ENCODE measurements at regions of chr5 and their contacts with region 1.

Region 1: DNA sequence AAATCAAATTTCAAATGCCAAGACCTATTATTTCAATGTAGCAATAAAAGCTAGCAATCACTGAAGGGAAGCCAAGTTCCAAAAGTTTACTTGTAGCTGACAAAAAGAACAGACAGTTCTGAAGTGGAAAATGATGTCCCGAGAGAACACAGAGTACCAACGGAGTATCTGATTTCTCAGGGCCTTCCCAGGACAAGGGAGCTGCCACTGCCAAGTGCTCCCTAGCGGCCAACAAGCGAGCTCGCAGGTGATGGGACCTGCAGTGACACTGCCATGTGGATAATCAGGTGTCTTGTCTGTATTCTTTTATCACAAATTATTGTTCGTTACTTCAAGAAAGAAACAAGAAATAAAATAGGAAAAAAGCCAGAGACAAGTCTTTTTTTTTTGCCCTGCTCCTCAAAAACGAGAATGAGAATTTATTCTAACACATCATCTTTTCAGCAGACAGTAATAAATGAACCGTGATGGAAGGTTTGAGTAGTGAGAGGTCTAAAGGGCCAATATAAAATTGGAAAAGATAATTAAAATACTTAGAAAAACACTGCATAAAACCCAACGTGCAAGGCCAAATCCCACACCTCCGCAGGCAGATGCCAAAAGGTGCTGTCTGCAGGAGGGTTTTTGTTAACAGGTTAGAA is 159.4 kb downstream of the MYO10 start:
- DNase-seq: peak; percentile 87 to 93
- ATAC-seq: peak; percentile 89 to 93
- H3K4me3 ChIP-seq: no peak overlapping the region
- H3K27ac ChIP-seq: peak overlapping the region; percentile 80 to 88 (median 82)
- H3K4me1 ChIP-seq: peaks cover 29 to 34% of the 10 kb centered on the region in 2 donors
- H3K27me3 ChIP-seq: no peaks in the 10 kb centered on the region
- CTCF ChIP-seq: peak; percentile 55 to 78 (median 67)
- POLR2A ChIP-seq: no peak

Region 2: GRCh38 chr5:16552666-16553343 is 223.9 kb before region 1 on chr5:
- in situ Hi-C with region 1: no loop called
- intact Hi-C with region 1: loop called (anchors 1 kb)
- DNase-seq: peak; percentile 75 to 86
- ATAC-seq: peak; percentile 67 to 81
- H3K4me3 ChIP-seq: no peak overlapping the region
- H3K27ac ChIP-seq: peak overlapping the region; percentile 90 to 97 (median 94)
- H3K4me1 ChIP-seq: peaks cover 22 to 25% of the 10 kb centered on the region in 2 donors
- H3K27me3 ChIP-seq: no peaks in the 10 kb centered on the region
- CTCF ChIP-seq: peak; percentile 75 to 84 (median 81)
- POLR2A ChIP-seq: no peak

Region 3: DNA sequence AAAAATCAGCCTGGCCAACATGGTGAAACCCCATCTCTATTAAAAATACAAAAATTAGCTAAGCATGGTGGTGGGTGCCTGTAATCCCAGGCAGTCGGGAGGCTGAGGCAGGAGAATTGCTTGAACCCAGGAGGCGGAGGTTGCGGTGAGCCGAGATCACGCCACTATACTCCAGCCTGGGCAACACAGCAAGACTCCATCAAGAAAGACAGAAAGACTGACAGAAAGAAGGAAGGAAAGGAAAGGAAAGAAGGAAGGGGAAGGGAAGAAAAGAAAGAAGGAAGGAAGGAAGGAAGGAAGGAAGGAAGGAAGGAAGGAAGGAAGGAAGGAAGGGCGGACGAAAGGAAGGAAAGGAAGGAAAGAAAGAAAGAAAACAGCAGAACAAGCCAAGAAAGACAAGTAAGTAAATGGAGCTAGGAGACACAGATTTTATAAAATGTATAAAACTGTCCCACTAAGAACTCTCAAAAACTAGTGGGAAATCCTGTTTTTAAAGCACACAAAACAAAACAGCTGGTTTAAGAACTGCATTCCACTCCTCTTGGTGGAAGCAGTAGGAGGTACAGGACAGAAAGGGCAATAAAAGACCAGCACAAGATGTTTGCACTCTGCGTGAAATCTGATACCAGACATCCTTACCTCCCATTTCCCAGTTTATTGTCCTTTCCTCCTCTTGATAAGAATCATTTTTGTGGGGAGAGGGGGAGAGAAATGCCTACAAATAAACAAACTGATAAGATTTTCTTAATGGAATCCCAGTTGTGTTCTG is 112.7 kb after region 1 on chr5:
- in situ Hi-C with region 1: no loop called
- intact Hi-C with region 1: loop called (anchors 5 kb)
- DNase-seq: no peak
- ATAC-seq: no peak
- H3K4me3 ChIP-seq: no peak overlapping the region
- H3K27ac ChIP-seq: no peak overlapping the region
- H3K4me1 ChIP-seq: peaks cover 7 to 34% of the 10 kb centered on the region in 2 donors
- H3K27me3 ChIP-seq: no peaks in the 10 kb centered on the region
- CTCF ChIP-seq: no peak
- POLR2A ChIP-seq: no peak

Measured in gastrocnemius medialis (tissue), 4 donors.